ENCODE measurements at regions of chr7 and their contacts with region 1.

Region 1: DNA sequence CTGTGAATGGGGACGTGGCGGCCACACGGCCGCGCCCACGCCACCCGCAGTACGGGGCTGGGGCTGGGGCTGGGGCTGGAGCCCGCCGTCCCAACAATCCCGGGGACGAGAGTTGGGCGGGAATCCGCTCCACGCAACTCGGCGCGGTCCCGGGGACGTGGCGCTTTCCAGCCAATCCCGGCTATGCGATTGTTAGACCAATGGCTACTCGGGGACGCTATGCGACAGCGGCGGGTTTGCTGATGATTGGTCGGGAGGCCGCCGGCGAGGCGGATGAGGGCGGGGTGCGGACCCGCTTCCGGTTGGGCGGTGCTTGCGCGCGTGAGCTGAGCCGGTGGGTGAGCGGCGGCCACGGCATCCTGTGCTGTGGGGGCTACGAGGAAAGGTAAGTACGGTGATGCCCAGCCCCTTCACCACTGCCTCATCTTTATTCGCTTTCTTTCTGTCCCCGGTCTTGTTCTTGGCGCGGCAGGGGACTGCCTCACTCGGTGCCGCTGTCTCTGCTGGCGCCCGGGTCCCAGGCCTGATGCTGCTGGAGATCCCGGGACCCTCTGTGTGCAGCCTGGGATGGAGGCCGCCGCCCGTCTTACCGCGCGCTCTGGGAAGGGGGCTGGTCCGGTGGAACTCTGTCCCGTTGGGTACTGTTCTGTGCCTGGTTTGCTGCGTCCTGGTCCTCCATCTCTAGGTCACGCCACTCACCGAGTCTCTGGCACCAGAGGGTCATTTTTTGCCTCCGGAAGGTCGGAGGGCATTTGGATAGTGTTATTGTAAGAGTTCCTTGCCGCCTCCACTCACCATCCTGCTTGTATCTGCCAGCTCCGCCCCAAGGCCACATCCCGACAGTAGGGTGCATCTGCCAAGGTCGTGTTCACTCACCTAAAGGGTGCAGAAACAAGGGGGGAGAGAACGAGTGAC is at the start of gene CALU:
- DNase-seq: peak; percentile 99
- H3K4me3 ChIP-seq: peak within 1 kb of the TSS; percentile 78 to 97 (median 88)
- H3K27ac ChIP-seq: peak within 1 kb of the TSS; percentile 91 to 99 (median 94)
- H3K4me1 ChIP-seq: peaks cover 34 to 55% (median 54%) of the 10 kb centered on the region in 4 donors
- H3K27me3 ChIP-seq: no peaks in the 10 kb centered on the region
- CTCF ChIP-seq: peak in 1 of 3 experiments; percentile 12
- EP300 ChIP-seq: no peak
- POLR2A ChIP-seq: peak; percentile 96
- total RNA-seq, gene CALU: 188 to 269 (median 199) TPM

Region 2: DNA sequence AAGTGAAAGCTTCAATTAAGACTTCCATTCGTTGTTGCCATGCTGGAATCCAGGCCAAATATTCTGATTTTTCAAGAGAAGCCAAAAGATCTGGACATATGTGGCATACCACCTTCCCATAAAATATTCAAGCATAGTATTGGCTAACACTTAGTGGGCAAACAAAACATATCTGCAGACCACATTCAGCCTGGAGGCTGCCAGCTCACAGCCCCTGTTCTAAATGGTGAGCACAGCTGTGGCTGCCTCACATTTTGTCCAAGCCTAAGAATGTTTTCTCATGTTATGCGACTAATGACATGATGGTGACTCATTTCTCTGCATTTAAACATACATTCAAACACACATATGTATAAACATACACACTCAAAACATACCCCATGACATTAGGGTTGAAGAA is 10.7 kb before region 1 on chr7:
- intact Hi-C with region 1: no loop called
- DNase-seq: no peak
- H3K4me3 ChIP-seq: no peak overlapping the region
- H3K27ac ChIP-seq: no peak overlapping the region
- H3K4me1 ChIP-seq: no peaks in the 10 kb centered on the region
- H3K27me3 ChIP-seq: no peaks in the 10 kb centered on the region
- CTCF ChIP-seq: no peak
- EP300 ChIP-seq: no peak
- POLR2A ChIP-seq: no peak

Region 3: GRCh38 chr7:128883622-128884501 is 144.6 kb after region 1 on chr7:
- intact Hi-C with region 1: loop called (anchors 10 kb)
- DNase-seq: peak; percentile 97
- H3K4me3 ChIP-seq: peak overlapping the region in 1 of 4 donors; percentile 32
- H3K27ac ChIP-seq: no peak overlapping the region
- H3K4me1 ChIP-seq: peaks cover 0 to 16% (median 12%) of the 10 kb centered on the region in 4 donors
- H3K27me3 ChIP-seq: peaks cover 0 to 42% (median 0%) of the 10 kb centered on the region in 4 donors
- CTCF ChIP-seq: peak; percentile 89 to 95 (median 94)
- EP300 ChIP-seq: no peak
- POLR2A ChIP-seq: no peak